Sigmoid colon (tissue), 7 donors: ENCODE measurements at regions of chr13 and their contacts with region 1.

Region 1: GRCh38 chr13:94362411-94362909 is 117.0 kb downstream of the DCT start:
- DNase-seq: peak; percentile 82
- H3K4me3 ChIP-seq: no peak overlapping the region
- H3K27ac ChIP-seq: no peak overlapping the region
- H3K4me1 ChIP-seq: peaks cover 0 to 9% (median 1%) of the 10 kb centered on the region in 4 donors
- H3K27me3 ChIP-seq: no peaks in the 10 kb centered on the region
- CTCF ChIP-seq: peak; percentile 77 to 82 (median 82)
- EP300 ChIP-seq: no peak
- POLR2A ChIP-seq: no peak

Region 2: GRCh38 chr13:93227878-93228642 is 1134.4 kb before region 1 on chr13:
- intact Hi-C with region 1: loop called (anchors 5 kb)
- DNase-seq: peak; percentile 86
- H3K4me3 ChIP-seq: peak overlapping the region; percentile 55 to 67 (median 59)
- H3K27ac ChIP-seq: peak overlapping the region; percentile 71 to 81 (median 77)
- H3K4me1 ChIP-seq: peaks cover 0 to 23% (median 10%) of the 10 kb centered on the region in 4 donors
- H3K27me3 ChIP-seq: peaks cover 0 to 28% (median 0%) of the 10 kb centered on the region in 3 donors
- CTCF ChIP-seq: peak in 2 of 4 experiments; percentile 12 to 52
- EP300 ChIP-seq: no peak
- POLR2A ChIP-seq: no peak

Region 3: DNA sequence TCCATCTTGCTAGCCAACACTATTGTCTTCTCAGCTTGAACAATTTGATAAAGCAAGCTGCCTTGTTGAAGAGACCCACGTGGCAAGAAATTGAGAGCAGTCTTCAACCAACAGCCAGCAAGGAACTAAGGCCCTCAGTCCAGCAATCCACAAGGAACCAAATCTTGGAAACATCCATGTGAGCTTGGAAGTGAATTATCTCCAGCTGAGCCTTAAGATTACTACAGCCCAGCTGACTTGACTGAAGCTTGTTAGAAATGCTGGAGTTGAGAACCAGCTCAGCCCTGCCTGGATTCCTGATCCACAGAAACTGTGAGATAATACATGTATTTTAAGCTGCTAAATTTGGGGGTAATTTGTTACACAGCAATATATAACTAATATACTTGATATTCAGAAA is 143.3 kb after region 1 on chr13:
- intact Hi-C with region 1: no loop called
- DNase-seq: no peak
- H3K4me3 ChIP-seq: no peak overlapping the region
- H3K27ac ChIP-seq: no peak overlapping the region
- H3K4me1 ChIP-seq: no peaks in the 10 kb centered on the region
- H3K27me3 ChIP-seq: no peaks in the 10 kb centered on the region
- CTCF ChIP-seq: no peak
- EP300 ChIP-seq: no peak
- POLR2A ChIP-seq: no peak

Region 4: DNA sequence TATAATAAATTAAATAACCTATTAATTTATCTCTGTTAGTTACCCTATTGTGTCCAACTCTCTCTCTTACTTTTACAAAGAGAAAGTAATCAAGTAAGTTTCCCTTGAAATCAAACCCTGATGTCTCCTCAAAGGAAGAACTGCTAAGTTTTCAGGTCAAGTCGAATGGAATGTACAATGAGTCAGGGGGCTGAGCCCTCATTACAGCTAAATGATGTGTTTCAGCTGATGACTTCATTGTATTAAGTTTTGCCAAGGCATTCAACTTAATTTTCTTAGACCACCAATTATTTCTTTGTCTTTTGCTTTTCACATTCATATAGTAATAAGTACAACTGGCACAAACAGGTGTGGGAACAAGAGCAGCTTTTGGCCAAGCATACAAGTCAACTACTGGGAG is 171.7 kb after region 1 on chr13:
- intact Hi-C with region 1: no loop called
- DNase-seq: no peak
- H3K4me3 ChIP-seq: no peak overlapping the region
- H3K27ac ChIP-seq: no peak overlapping the region
- H3K4me1 ChIP-seq: no peaks in the 10 kb centered on the region
- H3K27me3 ChIP-seq: no peaks in the 10 kb centered on the region
- CTCF ChIP-seq: no peak
- EP300 ChIP-seq: no peak
- POLR2A ChIP-seq: no peak

Region 5: GRCh38 chr13:94753327-94753726 is 390.9 kb after region 1 on chr13:
- intact Hi-C with region 1: no loop called
- DNase-seq: no peak
- H3K4me3 ChIP-seq: no peak overlapping the region
- H3K27ac ChIP-seq: no peak overlapping the region
- H3K4me1 ChIP-seq: no peaks in the 10 kb centered on the region
- H3K27me3 ChIP-seq: no peaks in the 10 kb centered on the region
- CTCF ChIP-seq: no peak
- EP300 ChIP-seq: no peak
- POLR2A ChIP-seq: no peak